Adrenal gland (tissue), 19 donors: ENCODE measurements at regions of chr18 and their contacts with region 1.

Region 1: DNA sequence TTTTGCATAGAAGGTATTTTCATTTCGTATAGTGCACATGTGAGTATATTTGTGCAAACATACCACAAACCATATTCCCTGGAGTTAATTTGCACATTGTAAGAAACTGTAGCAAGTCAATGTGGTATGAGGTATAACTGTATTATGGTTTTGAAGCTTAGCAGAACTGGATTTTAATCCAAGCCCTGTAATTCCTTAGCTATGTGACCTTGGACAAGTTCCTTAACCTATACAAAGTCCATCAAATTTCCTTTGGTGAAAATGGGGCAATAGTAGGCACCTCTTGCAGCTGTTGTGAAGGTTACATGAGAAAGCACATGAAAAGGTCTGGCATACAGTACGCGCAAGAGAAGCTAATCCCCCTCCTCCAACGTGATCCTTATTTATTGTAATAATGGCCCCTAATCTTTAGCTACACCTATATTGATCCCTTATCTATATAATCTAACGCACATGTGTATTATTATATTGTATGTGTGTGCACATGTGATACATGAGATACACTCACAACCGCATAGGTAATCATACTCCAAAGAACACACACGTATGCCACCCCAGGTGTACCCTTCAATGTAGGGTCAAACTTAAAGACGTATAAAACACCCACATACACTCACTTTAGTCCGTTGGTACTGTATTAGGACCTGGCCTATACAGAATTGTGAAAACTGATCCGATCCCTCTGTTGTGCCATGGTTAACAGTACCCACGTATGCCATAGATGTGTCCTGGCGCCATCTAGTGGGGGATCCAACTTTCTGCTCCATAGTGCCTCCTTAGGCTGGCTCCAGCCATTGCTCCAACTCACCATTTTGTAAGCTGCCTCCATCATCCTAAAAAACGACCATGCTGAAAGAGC is 402.9 kb upstream of the SLC14A2 start:
- DNase-seq: peak; percentile 71 to 94 (median 82)
- H3K4me3 ChIP-seq: no peak overlapping the region
- H3K27ac ChIP-seq: no peak overlapping the region
- H3K4me1 ChIP-seq: no peaks in the 10 kb centered on the region
- H3K27me3 ChIP-seq: no peaks in the 10 kb centered on the region
- CTCF ChIP-seq: peak; percentile 78 to 97 (median 87)
- POLR2A ChIP-seq: no peak

Region 2: GRCh38 chr18:43620936-43621335 is 1591.5 kb before region 1 on chr18:
- intact Hi-C with region 1: loop called in 1 of 2 experiments (anchors 10 kb)
- DNase-seq: no peak
- H3K4me3 ChIP-seq: no peak overlapping the region
- H3K27ac ChIP-seq: no peak overlapping the region
- H3K4me1 ChIP-seq: no peaks in the 10 kb centered on the region
- H3K27me3 ChIP-seq: no peaks in the 10 kb centered on the region
- CTCF ChIP-seq: peak; percentile 42 to 74 (median 60)
- POLR2A ChIP-seq: no peak

Region 3: DNA sequence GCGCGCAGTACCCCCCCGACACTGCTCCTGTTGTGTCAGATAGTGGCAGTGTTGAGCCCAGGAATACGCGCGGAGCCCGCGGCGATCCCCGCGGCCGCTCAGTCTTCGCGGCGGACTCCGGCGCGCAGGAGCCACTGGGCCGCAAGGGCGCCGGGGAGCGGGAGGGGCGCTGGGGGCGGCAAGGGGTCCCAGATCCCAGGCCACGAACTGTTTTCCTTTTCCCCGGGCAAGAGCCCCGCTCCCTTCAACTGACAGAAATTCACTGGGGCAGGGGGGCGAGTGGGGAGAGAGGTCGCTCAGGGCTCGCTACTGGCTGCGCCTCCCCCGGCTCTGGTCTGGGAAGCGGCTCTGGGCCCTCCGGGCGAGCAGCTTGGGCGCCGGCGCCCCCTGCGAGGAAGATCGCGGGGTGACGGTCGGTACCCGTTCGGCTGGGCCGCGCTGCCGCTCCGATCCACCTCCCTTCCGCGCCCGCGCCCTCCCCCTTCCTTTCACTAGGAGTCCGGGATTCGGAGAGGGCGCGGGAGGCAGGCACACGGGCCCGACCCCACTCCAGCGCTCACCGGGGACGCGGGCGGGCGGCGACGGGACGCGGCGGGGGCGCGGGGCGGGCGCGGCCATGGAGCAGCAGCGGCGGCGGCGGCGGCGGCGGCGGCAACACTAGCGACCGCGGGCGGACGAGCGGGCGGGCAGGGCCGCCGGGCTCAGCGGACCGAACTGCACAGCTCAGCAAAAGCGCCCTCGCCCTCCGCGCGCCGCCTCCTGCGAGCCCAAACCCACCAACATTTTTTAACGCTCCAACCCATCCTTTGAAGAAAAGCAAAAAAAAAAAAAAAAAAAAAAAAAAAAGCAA is 533.1 kb before region 1 on chr18:
- intact Hi-C with region 1: loop called in 1 of 2 experiments (anchors 10 kb)
- DNase-seq: peak; percentile 77 to 93 (median 82)
- H3K4me3 ChIP-seq: peak overlapping the region in 3 of 4 donors; percentile 18 to 64 (median 56)
- H3K27ac ChIP-seq: peak overlapping the region; percentile 30 to 88 (median 75)
- H3K4me1 ChIP-seq: no peaks in the 10 kb centered on the region
- H3K27me3 ChIP-seq: no peaks in the 10 kb centered on the region
- CTCF ChIP-seq: peak; percentile 38 to 57 (median 52)
- POLR2A ChIP-seq: peak in 1 of 2 donors; percentile 54

Region 4: DNA sequence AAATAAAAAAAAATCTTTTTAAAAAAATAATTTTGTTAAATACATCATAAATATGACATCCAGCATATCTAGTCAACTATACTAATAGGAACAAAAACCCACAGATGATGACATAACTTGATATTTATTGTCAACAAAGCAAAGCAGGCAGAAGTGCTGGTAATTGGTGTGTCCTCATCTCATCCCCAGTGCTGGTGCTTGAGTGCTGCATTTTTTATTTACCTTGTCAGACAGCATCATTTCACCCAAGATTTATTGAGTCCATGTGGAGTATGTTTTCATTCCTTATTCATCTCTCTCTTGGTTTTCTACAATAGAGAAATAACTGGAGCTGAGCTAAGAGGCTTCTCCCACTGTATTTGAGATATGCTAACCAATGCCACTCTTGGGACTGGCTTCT is 211.2 kb after region 1 on chr18:
- intact Hi-C with region 1: no loop called
- DNase-seq: peak in 1 of 7 donors; percentile 57
- H3K4me3 ChIP-seq: no peak overlapping the region
- H3K27ac ChIP-seq: no peak overlapping the region
- H3K4me1 ChIP-seq: no peaks in the 10 kb centered on the region
- H3K27me3 ChIP-seq: no peaks in the 10 kb centered on the region
- CTCF ChIP-seq: no peak
- POLR2A ChIP-seq: no peak